ENCODE measurements at regions of chr3 and their contacts with region 1.

Region 1: DNA sequence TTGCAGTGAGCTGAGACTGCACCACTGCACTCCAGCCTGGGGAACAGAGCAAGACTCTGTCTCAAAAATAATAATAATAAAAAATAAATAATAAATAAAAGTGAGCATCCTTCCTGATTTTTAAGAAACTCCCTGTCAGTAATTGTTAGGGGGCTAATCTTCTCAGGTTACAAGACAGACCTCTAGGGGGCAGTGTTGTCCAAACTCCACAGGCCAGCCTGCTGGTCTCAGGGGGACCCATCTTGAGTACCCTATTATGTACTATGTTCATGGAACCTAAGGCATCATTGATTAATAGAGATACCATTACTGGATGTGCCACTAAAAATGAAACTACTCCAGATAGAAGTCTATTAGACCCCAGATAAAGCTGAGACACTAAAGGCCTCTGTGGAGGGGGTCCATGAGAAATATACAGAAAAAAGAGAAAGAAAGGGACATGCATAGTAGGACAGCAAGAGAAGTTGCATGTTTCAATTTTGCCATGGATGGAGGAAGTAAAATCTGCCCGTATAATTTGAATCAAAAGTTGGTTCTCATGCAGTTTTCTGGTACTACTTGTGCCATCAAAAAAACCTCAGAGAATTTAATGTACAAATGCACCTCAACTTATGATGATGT is 85.5 kb upstream of the CDV3 start:
- DNase-seq: peak; percentile 61
- H3K4me3 Mint-ChIP-seq: no peak overlapping the region
- H3K27ac Mint-ChIP-seq: no peak overlapping the region
- H3K4me1 Mint-ChIP-seq: peaks cover 48% of the 10 kb centered on the region
- H3K27me3 Mint-ChIP-seq: no peaks in the 10 kb centered on the region

Region 2: DNA sequence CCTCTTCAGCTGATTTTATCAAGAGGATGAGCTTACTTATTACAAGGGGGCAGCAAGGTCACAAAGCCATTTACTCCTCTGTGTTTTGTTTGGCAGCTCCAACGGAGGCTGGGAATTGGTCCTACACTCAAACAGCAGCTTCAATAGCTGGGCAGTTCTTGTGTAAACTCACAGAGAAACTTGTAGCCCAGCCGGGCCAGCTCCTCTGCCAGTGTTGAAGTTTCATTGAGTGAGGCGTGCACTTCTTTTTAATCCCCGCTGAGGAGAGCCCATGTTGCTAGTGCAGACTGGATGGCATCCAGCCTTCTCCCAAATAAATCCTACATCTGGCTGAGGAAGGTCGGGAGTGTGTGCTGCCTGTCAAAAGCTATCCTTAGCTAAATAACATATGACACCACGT is 28.6 kb before region 1 on chr3:
- CTCF ChIA-PET with region 1: interaction called, 25 read pairs
- POLR2A ChIA-PET with region 1: no interaction called
- intact Hi-C with region 1: no loop called
- DNase-seq: no peak
- H3K4me3 Mint-ChIP-seq: no peak overlapping the region
- H3K27ac Mint-ChIP-seq: no peak overlapping the region
- H3K4me1 Mint-ChIP-seq: peaks cover 16% of the 10 kb centered on the region
- H3K27me3 Mint-ChIP-seq: no peaks in the 10 kb centered on the region

Region 3: GRCh38 chr3:133464573-133464972 is 23.5 kb before region 1 on chr3:
- CTCF ChIA-PET with region 1: interaction called, 25 read pairs
- POLR2A ChIA-PET with region 1: no interaction called
- intact Hi-C with region 1: no loop called
- DNase-seq: no peak
- H3K4me3 Mint-ChIP-seq: no peak overlapping the region
- H3K27ac Mint-ChIP-seq: no peak overlapping the region
- H3K4me1 Mint-ChIP-seq: peaks cover 26% of the 10 kb centered on the region
- H3K27me3 Mint-ChIP-seq: no peaks in the 10 kb centered on the region

Region 4: DNA sequence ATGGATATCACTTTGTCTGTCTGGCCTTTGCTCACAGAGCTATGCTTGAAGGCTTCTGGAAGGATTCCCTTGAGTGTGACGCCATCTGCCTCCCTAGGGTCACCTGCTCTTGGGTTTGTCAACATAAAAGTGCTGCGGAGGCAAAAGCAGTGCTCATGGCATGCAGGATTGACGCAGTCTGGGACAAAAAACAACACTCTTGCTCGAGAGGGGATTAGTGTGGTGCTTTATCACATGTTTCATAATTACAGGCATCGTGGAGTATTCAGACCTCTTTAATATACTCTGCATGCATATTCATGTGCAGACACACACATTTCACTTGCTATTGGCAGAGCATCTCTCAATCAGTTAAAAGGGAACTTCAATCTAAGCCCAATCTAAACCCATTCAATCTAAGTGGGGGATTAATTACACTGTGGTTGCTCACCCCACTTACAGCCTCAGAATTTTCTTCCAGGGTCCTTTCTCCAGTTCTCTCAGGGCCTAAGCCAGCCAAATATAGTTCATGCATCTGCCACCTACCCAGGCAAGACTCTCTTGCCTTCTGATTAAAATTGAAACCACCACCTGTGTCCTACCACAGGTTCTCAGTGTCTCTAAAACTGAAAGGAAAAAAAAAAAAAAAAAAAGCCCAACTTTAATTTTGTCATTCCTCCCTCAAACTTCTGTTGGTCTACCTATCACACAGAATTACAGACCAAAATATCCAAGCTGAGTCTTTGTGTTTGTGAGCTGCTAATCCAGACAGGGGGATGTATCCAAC is 12.6 kb before region 1 on chr3:
- CTCF ChIA-PET with region 1: interaction called, 13 read pairs
- POLR2A ChIA-PET with region 1: no interaction called
- intact Hi-C with region 1: loop called (anchors 2 kb)
- DNase-seq: peak; percentile 38
- H3K4me3 Mint-ChIP-seq: no peak overlapping the region
- H3K27ac Mint-ChIP-seq: peak overlapping the region; percentile 57
- H3K4me1 Mint-ChIP-seq: peaks cover 38% of the 10 kb centered on the region
- H3K27me3 Mint-ChIP-seq: no peaks in the 10 kb centered on the region

Region 5: GRCh38 chr3:133506215-133506901 is 18.3 kb after region 1 on chr3:
- CTCF ChIA-PET with region 1: interaction called, 6 read pairs
- POLR2A ChIA-PET with region 1: interaction called, 3 read pairs
- intact Hi-C with region 1: loop called (anchors 2 kb)
- DNase-seq: peak; percentile 46
- H3K4me3 Mint-ChIP-seq: peak overlapping the region; percentile 67
- H3K27ac Mint-ChIP-seq: peak overlapping the region; percentile 77
- H3K4me1 Mint-ChIP-seq: peaks cover 15% of the 10 kb centered on the region
- H3K27me3 Mint-ChIP-seq: no peaks in the 10 kb centered on the region

Region 6: DNA sequence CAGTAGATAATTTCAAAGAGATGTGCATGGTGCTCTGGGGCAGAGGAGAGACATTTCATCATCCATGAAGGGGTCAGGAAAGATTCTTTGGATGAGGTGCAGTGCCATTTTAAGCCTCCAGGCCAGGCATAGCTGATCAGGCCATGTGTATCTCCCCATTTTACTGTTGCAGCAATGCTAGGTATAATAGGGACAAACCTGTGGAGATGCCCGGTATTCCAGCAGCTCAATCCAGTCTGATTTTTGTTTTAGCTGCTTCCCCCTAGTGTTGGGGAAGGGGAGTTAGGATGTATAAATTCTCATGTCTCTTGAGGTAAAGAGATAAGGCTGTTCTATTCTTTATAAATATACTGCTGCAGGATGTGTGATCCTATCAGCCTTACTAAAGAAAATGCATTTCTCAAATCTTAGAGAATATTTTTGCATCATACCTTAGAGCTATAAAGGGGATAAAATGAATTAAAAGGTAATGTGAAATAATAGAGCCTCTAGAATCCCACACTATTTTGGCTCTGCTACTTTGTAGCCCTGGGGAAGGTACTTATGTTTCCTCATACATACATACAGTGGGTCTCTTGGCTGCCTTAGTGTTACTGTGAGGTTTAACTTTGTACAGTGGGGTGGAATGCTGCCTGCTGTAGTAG is 90.6 kb after region 1 on chr3:
- CTCF ChIA-PET with region 1: interaction called, 30 read pairs
- POLR2A ChIA-PET with region 1: interaction called, 19 read pairs
- intact Hi-C with region 1: loop called (anchors 1 kb)
- DNase-seq: no peak
- H3K4me3 Mint-ChIP-seq: peak overlapping the region; percentile 12
- H3K27ac Mint-ChIP-seq: peak overlapping the region; percentile 72
- H3K4me1 Mint-ChIP-seq: peaks cover 62% of the 10 kb centered on the region
- H3K27me3 Mint-ChIP-seq: no peaks in the 10 kb centered on the region

Region 7: DNA sequence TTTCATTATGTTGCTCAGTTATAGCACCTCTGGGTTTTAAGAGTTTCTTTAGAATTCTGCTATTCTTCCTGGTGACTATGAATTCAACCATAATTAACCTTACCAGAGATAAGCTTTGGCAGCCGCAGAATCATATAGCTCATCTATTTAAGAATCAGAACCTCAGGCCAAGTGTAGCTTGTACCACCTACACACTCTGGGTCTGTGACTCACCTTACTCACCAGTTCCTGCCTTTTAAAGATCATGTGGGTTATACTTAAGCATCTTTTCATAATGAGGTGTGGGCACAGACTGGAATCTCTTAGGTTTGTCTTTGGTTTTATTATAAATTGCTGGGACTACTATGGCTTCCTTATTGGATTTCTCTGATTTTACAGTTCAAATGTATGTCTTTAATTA is 107.3 kb after region 1 on chr3:
- CTCF ChIA-PET with region 1: interaction called, 14 read pairs
- POLR2A ChIA-PET with region 1: no interaction called
- intact Hi-C with region 1: no loop called
- DNase-seq: peak; percentile 41
- H3K4me3 Mint-ChIP-seq: no peak overlapping the region
- H3K27ac Mint-ChIP-seq: peak overlapping the region; percentile 23
- H3K4me1 Mint-ChIP-seq: peaks cover 28% of the 10 kb centered on the region
- H3K27me3 Mint-ChIP-seq: no peaks in the 10 kb centered on the region

Measured in activated CD4-positive, alpha-beta memory T cell treated with anti-CD3 and anti-CD28 coated beads for 36 hours (primary cell).